Activated naive CD8-positive, alpha-beta T cell treated with anti-CD3 and anti-CD28 coated beads, Interleukin-2, amount 10 ng/mL, durations not matched to agents 7 days and 5 days (primary cell): ENCODE measurements at regions of chr20 and their contacts with region 1.

Region 1: DNA sequence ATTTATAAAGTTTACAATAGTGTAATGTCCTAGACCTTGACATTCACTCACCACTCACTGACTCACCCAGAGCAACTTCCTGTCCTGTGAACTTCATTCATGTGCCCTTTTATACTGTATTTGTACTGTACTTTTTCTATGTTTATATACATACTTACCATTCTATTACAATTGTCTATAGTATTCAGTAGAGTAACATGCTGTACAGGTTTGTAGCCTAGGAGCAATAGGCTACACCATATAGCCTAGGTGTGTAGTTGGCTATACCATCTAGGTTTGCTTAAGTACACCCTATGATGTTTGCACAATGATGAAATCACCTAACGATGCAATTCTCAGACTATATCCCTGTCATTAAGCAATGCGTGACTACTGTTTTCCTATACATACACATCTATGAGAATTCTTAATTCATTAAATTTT is 17.5 kb downstream of the EDEM2 start:
- DNase-seq: no peak
- ATAC-seq: peak; percentile 54
- H3K4me3 Mint-ChIP-seq: no peak overlapping the region
- H3K27ac Mint-ChIP-seq: no peak overlapping the region
- H3K4me1 Mint-ChIP-seq: no peaks in the 10 kb centered on the region
- H3K27me3 Mint-ChIP-seq: no peaks in the 10 kb centered on the region

Region 2: DNA sequence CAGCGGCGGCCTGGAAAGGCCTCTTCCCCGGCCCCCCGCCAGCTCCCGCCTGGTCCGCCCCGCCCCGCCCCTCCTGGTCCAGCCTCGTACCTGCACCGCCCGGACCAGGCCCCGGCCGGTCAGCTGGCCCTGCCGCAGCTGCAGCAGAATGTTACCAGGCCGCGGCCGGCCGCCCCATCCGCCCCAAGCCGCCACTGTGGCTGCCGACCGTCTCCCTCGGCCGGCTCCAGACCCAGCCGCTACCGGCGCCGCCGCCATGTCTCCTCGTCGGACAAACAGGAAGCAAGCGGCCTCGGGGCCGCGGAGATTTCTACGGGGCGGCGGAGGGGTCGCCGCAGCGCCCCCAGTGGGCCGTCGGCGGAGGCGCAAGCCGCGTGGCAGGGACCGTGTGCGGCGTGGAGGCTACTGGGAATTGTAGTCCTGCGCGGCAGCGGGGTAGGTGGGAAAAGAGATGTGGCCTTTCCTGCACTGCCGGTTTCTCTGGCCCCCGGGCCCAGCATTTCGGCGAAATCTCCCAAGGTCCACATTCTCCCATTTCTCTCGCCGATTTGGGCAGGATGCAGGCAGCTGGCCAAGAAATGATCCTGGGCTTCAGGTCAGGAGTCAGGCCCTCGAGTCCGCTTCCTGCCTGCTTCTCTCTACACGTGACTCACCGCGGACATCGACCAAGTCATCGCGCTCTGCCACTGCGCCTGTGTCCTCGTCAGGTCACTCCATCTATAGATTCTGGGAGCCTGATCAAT is 37.0 kb before region 1 on chr20 and contains the start of gene TRPC4AP:
- POLR2A ChIA-PET with region 1: interaction called, 10 read pairs
- DNase-seq: peak; percentile 93
- ATAC-seq: peak; percentile 92
- H3K4me3 Mint-ChIP-seq: peak within 1 kb of the TSS; percentile 93
- H3K27ac Mint-ChIP-seq: peak within 1 kb of the TSS; percentile 95
- H3K4me1 Mint-ChIP-seq: peaks cover 24% of the 10 kb centered on the region
- H3K27me3 Mint-ChIP-seq: no peaks in the 10 kb centered on the region
- total RNA-seq, gene TRPC4AP: 59.9 to 60.6 TPM